H1 (cell line): ENCODE measurements at regions of chr19 and their contacts with region 1.

Region 1: DNA sequence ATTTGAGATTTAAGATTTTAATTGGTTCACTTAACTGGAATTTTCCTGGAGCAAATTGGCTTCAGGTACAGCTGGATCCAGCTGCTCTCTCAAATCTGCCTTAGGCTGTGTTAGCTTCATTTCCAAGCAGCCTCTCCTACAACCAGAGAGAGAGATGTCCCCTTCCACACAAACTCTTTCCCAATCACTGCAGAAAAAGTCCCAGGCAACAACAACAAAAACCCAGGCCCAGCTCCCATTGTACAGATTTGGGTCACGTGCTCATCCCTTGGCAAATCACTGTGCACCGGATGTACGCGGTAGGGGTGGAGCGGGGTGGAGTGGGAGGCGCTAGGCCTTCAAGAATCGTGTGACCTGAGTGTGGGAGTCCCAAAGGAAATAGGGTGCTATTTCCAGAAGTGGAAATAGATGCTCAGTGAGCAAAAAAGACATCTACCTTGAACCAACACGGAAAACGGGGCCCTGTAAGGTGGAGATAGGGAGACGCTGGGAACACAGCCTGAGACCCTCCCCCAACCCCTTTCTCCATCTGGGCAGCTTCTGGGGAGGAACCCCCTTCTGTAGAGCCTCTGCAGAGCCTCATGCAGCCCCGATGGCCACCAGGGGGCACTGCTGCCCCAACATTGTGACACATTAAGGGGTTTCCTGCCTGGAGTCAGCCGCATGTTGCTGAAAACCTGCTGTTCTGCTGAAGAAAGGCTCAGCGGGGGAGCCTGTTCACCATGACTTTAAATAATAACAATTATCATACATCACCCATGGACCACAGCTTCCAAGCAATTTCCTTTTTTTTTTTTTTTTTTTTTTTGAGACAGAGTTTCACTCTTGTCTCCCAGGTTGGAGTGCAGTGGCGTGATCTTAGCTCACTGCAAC is 25.4 kb downstream of the HPN start:
- DNase-seq: peak; percentile 96 to 99
- H3K4me3 ChIP-seq: peak overlapping the region in 2 of 4 experiments; percentile 21 to 44; a peak in 3 of 8 replicates
- H3K27ac ChIP-seq: peak overlapping the region; percentile 54; the same call in 1 of the 2 replicates
- H3K4me1 ChIP-seq: peaks cover 3 to 13% (median 11%) of the 10 kb centered on the region in 4 experiments
- H3K27me3 ChIP-seq: peaks cover 0 to 2% (median 0%) of the 10 kb centered on the region in 4 experiments; a peak in 1 of 7 replicates
- CTCF ChIP-seq: peak; percentile 88 to 98 (median 96)
- EP300 ChIP-seq: no peak
- POLR2A ChIP-seq: 0 out of 3 replicates have a peak, but pooled peaks of 1 of the 2 experiments have one; percentile 25
- RAD21 ChIP-seq: peak; percentile 93 to 97

Region 2: GRCh38 chr19:35055715-35056179 is 11.2 kb before region 1 on chr19:
- CTCF ChIA-PET with region 1: interaction called, 20 read pairs
- POLR2A ChIA-PET with region 1: interaction called, 17 read pairs
- DNase-seq: peak; percentile 75
- H3K4me3 ChIP-seq: 0 out of 8 replicates have a peak overlapping the region, but pooled peaks of 1 of the 4 experiments have one; percentile 26
- H3K27ac ChIP-seq: no peak overlapping the region
- H3K4me1 ChIP-seq: peaks cover 0 to 11% (median 2%) of the 10 kb centered on the region in 4 experiments; a peak in 5 of 7 replicates
- H3K27me3 ChIP-seq: no peaks in the 10 kb centered on the region
- CTCF ChIP-seq: peak; percentile 83 to 91 (median 89)
- EP300 ChIP-seq: no peak
- POLR2A ChIP-seq: no peak
- RAD21 ChIP-seq: peak; percentile 67 to 72

Region 3: DNA sequence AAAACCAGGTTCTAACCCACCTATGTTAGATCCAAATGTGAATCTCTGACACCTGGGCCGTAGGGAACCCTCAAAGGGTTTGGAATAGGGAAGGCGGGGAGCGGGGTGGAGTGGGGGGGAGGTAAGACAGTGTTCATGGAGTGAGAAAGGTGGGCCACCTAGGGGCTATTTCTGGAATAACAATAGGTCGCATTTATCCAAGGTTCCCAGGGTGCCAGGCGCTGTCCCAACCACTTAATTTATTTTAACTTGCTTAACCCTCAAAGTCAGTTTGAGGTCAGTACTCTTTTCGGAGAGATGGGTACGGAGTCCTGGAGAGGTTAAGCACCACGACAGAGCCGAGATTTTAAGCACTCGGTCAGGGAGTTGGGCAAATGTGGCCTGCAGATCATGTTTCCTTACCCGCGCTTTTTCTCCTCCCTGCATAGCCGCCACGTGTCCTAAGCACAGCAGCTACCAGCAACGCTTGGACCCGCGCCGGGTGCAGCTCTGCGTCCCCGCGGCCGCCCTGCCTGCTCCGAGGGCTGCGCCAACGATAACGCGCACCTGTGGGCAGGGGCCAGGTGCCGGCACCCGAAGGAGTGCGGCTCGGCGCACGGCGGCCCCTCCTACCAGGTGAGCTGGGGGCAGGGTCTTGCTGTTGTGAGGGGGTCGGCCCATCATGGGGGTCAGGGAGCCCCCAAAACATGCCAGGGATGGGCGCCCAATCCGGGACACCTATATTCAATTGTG is 23.7 kb after region 1 on chr19:
- CTCF ChIA-PET with region 1: interaction called, 33 read pairs
- POLR2A ChIA-PET with region 1: interaction called, 26 read pairs
- DNase-seq: peak in 1 of 2 experiments; percentile 80
- H3K4me3 ChIP-seq: peak overlapping the region; percentile 13 to 45 (median 36); a peak in 7 of 8 replicates
- H3K27ac ChIP-seq: no peak overlapping the region
- H3K4me1 ChIP-seq: peaks cover 3 to 14% (median 6%) of the 10 kb centered on the region in 4 experiments; a peak in 6 of 7 replicates
- H3K27me3 ChIP-seq: no peaks in the 10 kb centered on the region
- CTCF ChIP-seq: peak; percentile 38 to 49 (median 40)
- EP300 ChIP-seq: no peak
- POLR2A ChIP-seq: 0 out of 3 replicates have a peak, but pooled peaks of 1 of the 2 experiments have one; percentile 19
- RAD21 ChIP-seq: peak; percentile 52 to 59

Region 4: GRCh38 chr19:35109395-35110112 is 42.6 kb after region 1 on chr19:
- CTCF ChIA-PET with region 1: interaction called, 21 read pairs
- POLR2A ChIA-PET with region 1: interaction called, 3 read pairs
- DNase-seq: no peak
- H3K4me3 ChIP-seq: no peak overlapping the region
- H3K27ac ChIP-seq: no peak overlapping the region
- H3K4me1 ChIP-seq: peaks cover 0 to 8% (median 2%) of the 10 kb centered on the region in 4 experiments; a peak in 3 of 7 replicates
- H3K27me3 ChIP-seq: no peaks in the 10 kb centered on the region; a peak in 1 of 7 replicates
- CTCF ChIP-seq: no peak
- EP300 ChIP-seq: no peak
- POLR2A ChIP-seq: no peak
- RAD21 ChIP-seq: no peak

Region 5: DNA sequence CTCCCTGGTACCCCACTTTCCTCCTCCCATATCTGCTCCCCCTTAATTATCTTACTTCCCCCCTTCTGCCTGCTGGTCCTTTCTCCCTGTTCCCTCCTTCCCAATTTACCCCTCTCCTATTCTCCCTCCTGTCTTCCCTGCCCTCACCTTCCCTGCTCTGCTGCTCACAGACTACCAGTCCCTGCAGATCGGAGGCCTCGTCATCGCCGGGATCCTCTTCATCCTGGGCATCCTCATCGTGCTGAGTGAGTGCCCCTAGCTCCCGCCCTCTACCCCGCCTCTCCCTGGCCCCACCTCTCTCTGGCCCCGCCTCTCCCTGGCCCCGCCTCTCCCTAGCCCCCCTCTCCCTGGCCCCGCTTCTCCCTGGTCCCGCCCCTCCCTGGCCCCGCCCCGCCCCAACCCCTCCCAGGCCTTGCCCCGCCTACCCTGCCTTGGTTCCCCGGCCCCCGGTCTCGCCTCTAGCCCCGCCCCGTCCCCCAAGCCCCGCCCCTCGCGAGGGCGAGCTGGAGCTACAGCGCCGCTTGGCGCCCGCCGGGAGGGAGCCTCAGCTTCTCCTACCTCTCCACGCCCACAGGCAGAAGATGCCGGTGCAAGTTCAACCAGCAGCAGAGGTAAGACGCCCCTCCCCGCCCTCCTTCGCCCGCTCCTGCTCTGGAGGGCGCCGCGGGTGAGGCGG is 74.2 kb after region 1 on chr19:
- CTCF ChIA-PET with region 1: interaction called, 73 read pairs
- POLR2A ChIA-PET with region 1: interaction called, 23 read pairs
- DNase-seq: peak; percentile 86 to 98
- H3K4me3 ChIP-seq: peak overlapping the region; percentile 12 to 68 (median 50)
- H3K27ac ChIP-seq: no peak overlapping the region
- H3K4me1 ChIP-seq: peaks cover 5 to 32% (median 25%) of the 10 kb centered on the region in 4 experiments
- H3K27me3 ChIP-seq: peaks cover 0 to 18% (median 8%) of the 10 kb centered on the region in 4 experiments; a peak in 5 of 7 replicates
- CTCF ChIP-seq: peak; percentile 44 to 65 (median 61)
- EP300 ChIP-seq: no peak
- POLR2A ChIP-seq: no peak
- RAD21 ChIP-seq: peak; percentile 55 to 64